Right cardiac atrium (tissue), 5 donors: ENCODE measurements at regions of chr11 and their contacts with region 1.

Region 1: GRCh38 chr11:45110562-45110961 is 35.9 kb upstream of the PRDM11 start:
- DNase-seq: peak in 1 of 3 donors; percentile 16
- ATAC-seq: peak; percentile 55 to 71
- H3K4me3 ChIP-seq: no peak overlapping the region
- H3K27ac ChIP-seq: no peak overlapping the region
- H3K4me1 ChIP-seq: no peaks in the 10 kb centered on the region
- H3K27me3 ChIP-seq: no peaks in the 10 kb centered on the region

Region 2: DNA sequence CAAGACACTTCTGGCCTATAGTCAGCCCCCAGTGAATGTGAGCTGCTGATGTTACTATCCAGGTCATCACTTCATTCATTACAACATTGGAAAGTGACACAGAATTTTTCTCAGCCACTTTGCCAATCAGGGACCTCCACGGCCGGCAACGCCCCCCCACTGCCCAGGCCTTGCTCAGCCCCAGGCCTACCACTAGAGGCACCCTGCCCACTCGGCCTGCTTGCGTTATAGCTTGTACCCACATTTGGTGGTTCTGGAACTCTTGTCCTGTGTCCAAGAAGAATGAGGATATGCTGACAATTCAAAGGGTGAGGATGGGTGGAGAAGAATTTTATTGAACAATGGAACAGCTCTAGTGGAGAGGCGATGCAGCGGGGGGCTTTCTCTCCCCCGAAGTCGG is 287.6 kb before region 1 on chr11:
- intact Hi-C with region 1: no loop called
- DNase-seq: no peak
- ATAC-seq: no peak
- H3K4me3 ChIP-seq: no peak overlapping the region
- H3K27ac ChIP-seq: no peak overlapping the region
- H3K4me1 ChIP-seq: peaks cover 11% of the 10 kb centered on the region
- H3K27me3 ChIP-seq: no peaks in the 10 kb centered on the region

Region 3: GRCh38 chr11:45057938-45058646 is 52.5 kb before region 1 on chr11:
- intact Hi-C with region 1: no loop called
- DNase-seq: no peak
- ATAC-seq: peak in 1 of 2 donors; percentile 27
- H3K4me3 ChIP-seq: no peak overlapping the region
- H3K27ac ChIP-seq: peak overlapping the region; percentile 39
- H3K4me1 ChIP-seq: no peaks in the 10 kb centered on the region
- H3K27me3 ChIP-seq: no peaks in the 10 kb centered on the region

Region 4: GRCh38 chr11:45294499-45294898 is 183.9 kb after region 1 on chr11:
- intact Hi-C with region 1: loop called (anchors 2 to 5 kb)
- DNase-seq: peak in 1 of 3 donors; percentile 31
- ATAC-seq: peak; percentile 24 to 28
- H3K4me3 ChIP-seq: no peak overlapping the region
- H3K27ac ChIP-seq: no peak overlapping the region
- H3K4me1 ChIP-seq: no peaks in the 10 kb centered on the region
- H3K27me3 ChIP-seq: no peaks in the 10 kb centered on the region